GM12878 (cell line): ENCODE measurements at regions of chr2 and their contacts with region 1.

Region 1: DNA sequence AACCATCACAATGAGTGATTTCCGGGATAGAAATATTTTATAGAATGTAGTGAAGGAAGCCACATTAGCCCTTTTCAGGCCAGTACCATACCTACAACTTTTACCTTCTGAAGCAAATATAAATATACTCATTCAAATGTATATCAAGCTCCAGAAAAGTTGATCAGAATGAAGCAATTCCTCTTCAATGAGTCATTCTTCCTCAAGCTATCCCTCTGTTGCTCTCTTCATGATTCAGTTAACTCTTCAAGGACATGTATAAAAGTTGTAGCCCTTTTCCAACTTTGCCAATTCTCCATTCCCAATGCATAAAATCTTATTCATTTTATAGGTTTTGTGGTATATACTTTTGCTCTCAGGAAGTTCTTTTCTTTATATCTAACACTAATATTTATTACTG is 242.1 kb upstream of the RGPD4 start:
- DNase-seq: no peak
- ATAC-seq: no peak
- H3K4me3 ChIP-seq: no peak overlapping the region
- H3K27ac ChIP-seq: no peak overlapping the region
- H3K4me1 ChIP-seq: no peaks in the 10 kb centered on the region
- H3K27me3 ChIP-seq: no peaks in the 10 kb centered on the region
- CTCF ChIP-seq: no peak
- EP300 ChIP-seq: no peak
- POLR2A ChIP-seq: no peak
- RAD21 ChIP-seq: no peak

Region 2: DNA sequence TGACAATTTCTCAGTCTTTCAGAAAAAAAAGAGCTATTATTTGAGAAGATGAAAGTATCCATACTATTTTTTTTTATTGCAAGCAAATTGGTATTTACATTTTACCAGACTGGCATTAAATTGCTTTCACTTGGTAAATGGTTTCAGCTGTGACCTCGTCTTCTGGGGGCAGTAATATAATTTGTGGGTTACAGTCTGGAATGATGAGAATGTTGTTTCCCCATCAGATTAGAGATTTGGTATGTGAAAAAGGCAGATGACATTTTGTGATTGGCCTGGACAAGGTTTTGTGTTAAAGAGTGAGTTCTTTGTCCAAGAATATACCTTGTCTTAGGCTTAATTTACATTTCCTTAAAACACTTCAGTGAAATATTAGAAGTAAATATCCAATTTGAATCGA is 308.5 kb before region 1 on chr2:
- CTCF ChIA-PET with region 1: no interaction called
- POLR2A ChIA-PET with region 1: no interaction called
- RAD21 ChIA-PET with region 1: no interaction called
- SMC1A ChIA-PET with region 1: no interaction called
- in situ Hi-C with region 1: no loop called
- intact Hi-C with region 1: loop called (anchors 5 kb)
- DNase-seq: no peak
- ATAC-seq: no peak
- H3K4me3 ChIP-seq: no peak overlapping the region
- H3K27ac ChIP-seq: no peak overlapping the region
- H3K4me1 ChIP-seq: no peaks in the 10 kb centered on the region
- H3K27me3 ChIP-seq: no peaks in the 10 kb centered on the region; a peak in 2 of 4 replicates
- CTCF ChIP-seq: no peak
- EP300 ChIP-seq: no peak
- POLR2A ChIP-seq: no peak
- RAD21 ChIP-seq: no peak